PC-9 (cell line): ENCODE measurements at regions of chr1 and their contacts with region 1.

Region 1: DNA sequence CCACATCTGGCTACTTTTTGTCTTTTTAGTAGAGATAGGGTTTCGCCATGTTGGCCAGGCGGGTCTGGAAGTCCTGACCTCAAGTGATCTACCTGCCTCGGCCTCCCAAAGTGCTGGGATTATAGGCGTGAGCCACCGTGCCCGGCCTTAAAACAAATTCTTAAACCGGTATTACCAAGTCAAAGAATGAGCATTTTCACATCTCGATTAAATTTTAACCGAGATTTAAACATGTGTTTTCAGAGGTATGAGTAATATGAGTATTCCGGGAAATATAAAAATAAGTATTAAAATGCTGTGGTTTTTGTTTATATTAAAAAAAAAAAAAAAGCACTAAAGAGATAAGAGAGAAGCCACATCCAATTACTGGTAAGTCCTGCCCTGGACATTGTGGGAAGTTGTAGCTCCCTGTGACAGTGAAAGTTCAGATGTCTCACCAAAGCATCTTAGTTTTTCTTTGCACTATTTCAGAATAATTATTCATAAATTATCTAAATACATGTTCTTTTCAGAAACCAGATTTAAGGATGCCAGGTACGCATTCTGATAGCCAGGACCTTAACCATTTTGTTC is 24.9 kb downstream of the ZNF281 start:
- DNase-seq: no peak
- H3K4me3 ChIP-seq: no peak overlapping the region
- H3K27ac ChIP-seq: no peak overlapping the region
- H3K4me1 ChIP-seq: peaks cover 1% of the 10 kb centered on the region
- H3K27me3 ChIP-seq: no peaks in the 10 kb centered on the region
- CTCF ChIP-seq: no peak

Region 2: DNA sequence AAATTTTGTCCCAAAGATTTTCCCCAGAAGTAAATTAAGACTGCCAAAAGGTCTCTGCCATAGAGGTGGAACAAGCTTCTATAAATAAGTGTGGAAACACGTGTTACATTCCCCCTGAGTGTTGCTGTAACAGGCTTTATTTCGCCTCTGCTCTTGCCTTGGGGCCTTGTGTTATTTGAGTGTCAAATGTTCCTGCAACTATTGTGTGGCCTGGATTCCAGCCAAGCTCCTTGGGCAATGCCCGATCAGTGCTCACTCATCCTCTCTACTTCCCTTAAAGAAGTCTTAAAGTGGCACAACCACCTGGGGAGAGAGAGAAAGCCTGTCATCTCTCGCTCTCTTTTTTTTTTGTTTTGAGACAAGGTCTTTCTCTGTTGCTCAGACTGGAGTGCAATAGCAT is 200.7 kb before region 1 on chr1:
- CTCF ChIA-PET with region 1: no interaction called
- POLR2A ChIA-PET with region 1: no interaction called
- intact Hi-C with region 1: no loop called
- DNase-seq: peak; percentile 90 to 96
- H3K4me3 ChIP-seq: no peak overlapping the region
- H3K27ac ChIP-seq: peak overlapping the region; percentile 42
- H3K4me1 ChIP-seq: peaks cover 47% of the 10 kb centered on the region
- H3K27me3 ChIP-seq: no peaks in the 10 kb centered on the region
- CTCF ChIP-seq: no peak

Region 3: GRCh38 chr1:200279810-200280411 is 105.0 kb before region 1 on chr1:
- CTCF ChIA-PET with region 1: no interaction called
- POLR2A ChIA-PET with region 1: interaction called, 24 read pairs
- intact Hi-C with region 1: no loop called
- DNase-seq: peak in 1 of 2 experiments; percentile 23
- H3K4me3 ChIP-seq: no peak overlapping the region
- H3K27ac ChIP-seq: no peak overlapping the region
- H3K4me1 ChIP-seq: no peaks in the 10 kb centered on the region
- H3K27me3 ChIP-seq: no peaks in the 10 kb centered on the region
- CTCF ChIP-seq: peak; percentile 75

Region 4: DNA sequence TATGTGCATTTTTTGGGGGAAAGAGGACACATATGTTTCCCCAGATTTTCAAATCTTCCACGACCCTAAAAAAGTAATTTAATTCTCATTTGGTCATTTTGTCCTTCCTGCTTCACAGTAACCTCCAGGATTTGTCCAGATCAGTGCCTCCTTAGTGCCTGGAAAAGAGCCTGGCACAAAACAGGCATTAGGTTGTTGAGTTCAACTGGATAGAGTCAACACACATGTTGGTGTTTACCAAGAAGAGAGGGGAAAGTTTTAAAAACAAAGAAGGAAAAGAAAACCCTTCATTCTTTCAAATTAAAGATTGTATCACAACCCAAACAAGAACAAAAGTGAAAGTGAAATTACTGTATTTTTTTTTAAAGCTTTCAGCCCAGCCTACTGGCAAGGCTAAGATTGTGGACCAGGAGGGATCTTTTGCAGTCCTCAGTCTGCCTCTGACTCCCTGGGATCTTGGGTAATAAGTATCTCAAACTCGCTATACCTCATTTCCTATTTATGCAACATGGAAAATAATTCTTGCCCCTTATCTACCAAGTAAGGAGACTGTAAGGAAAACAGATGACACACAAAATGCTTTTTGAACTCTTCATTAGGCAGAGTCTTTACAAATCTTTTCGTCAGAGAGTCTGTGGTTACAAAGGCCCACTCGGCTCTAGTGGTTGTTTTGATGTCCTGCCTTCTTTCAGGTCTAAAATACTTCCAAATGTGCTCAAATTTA is 32.9 kb before region 1 on chr1:
- CTCF ChIA-PET with region 1: no interaction called
- POLR2A ChIA-PET with region 1: interaction called, 26 read pairs
- intact Hi-C with region 1: no loop called
- DNase-seq: peak in 1 of 2 experiments; percentile 65
- H3K4me3 ChIP-seq: no peak overlapping the region
- H3K27ac ChIP-seq: peak overlapping the region; percentile 33
- H3K4me1 ChIP-seq: peaks cover 19% of the 10 kb centered on the region
- H3K27me3 ChIP-seq: no peaks in the 10 kb centered on the region
- CTCF ChIP-seq: no peak